Activated CD8-positive, alpha-beta memory T cell treated with anti-CD3 and anti-CD28 coated beads, Interleukin-2, amount 10 ng/mL, durations not matched to agents 7 days and 5 days (primary cell): ENCODE measurements at regions of chr2 and their contacts with region 1.

Region 1: DNA sequence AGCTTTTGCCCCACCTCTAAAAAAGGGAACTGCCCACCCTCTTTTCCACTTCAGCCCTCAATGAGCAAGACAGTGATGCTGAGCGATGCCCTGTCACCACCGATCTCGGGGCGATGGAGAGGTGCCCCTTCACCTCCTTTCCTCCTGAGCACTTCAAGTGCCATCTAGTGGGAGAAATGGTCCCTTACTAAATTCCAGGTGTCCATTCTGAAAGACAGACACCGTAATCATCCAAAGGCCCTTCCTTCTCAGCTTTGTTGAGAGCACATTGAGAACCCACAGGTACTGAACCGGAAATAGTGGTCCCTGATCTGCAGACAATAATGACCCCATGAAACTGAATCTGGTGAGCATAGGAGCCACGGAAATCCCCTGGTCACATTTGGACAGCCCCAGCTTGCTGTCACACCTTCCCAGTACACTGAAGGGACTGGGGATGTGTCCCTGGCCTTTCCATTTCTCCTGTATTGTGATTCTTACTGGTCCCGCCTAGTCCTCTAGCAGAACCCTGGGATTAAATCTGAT is 38.5 kb downstream of the KCTD18 start:
- DNase-seq: peak; percentile 58
- ATAC-seq: peak; percentile 38
- H3K4me3 Mint-ChIP-seq: no peak overlapping the region
- H3K27ac Mint-ChIP-seq: peak overlapping the region; percentile 64
- H3K4me1 Mint-ChIP-seq: peaks cover 40% of the 10 kb centered on the region
- H3K27me3 Mint-ChIP-seq: no peaks in the 10 kb centered on the region

Region 2: GRCh38 chr2:199979832-199980628 is 491.4 kb before region 1 on chr2:
- CTCF ChIA-PET with region 1: interaction called, 29 read pairs
- DNase-seq: peak; percentile 88
- ATAC-seq: peak; percentile 48
- H3K4me3 Mint-ChIP-seq: peak overlapping the region; percentile 31
- H3K27ac Mint-ChIP-seq: peak overlapping the region; percentile 36
- H3K4me1 Mint-ChIP-seq: peaks cover 29% of the 10 kb centered on the region
- H3K27me3 Mint-ChIP-seq: no peaks in the 10 kb centered on the region

Region 3: GRCh38 chr2:199985625-199986207 is 485.7 kb before region 1 on chr2:
- CTCF ChIA-PET with region 1: interaction called, 29 read pairs
- DNase-seq: peak; percentile 78
- ATAC-seq: peak; percentile 75
- H3K4me3 Mint-ChIP-seq: no peak overlapping the region
- H3K27ac Mint-ChIP-seq: no peak overlapping the region
- H3K4me1 Mint-ChIP-seq: peaks cover 5% of the 10 kb centered on the region
- H3K27me3 Mint-ChIP-seq: no peaks in the 10 kb centered on the region

Region 4: DNA sequence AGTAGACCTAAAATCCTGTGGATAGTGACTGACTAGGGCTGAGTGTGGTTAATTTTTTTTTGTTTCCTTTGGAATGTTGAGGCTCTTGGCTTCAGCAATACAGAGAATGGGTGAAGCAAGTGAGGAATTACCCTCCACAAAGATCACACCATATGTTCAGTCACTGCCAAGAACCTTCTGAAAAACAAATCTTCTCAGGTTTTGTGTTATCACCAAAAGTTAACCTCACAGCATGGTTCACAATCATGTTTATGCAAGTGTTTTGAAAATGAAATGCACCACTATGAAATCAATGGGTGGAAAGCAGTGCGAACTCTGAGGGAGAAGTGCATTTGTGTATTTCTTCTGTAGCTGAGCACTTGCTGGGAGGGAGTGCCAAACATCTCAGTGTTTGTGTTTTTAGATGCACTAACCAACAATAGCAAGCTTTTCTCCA is 120.5 kb before region 1 on chr2:
- CTCF ChIA-PET with region 1: no interaction called
- DNase-seq: no peak
- ATAC-seq: no peak
- H3K4me3 Mint-ChIP-seq: no peak overlapping the region
- H3K27ac Mint-ChIP-seq: no peak overlapping the region
- H3K4me1 Mint-ChIP-seq: peaks cover 5% of the 10 kb centered on the region
- H3K27me3 Mint-ChIP-seq: no peaks in the 10 kb centered on the region